Right ventricle myocardium inferior (tissue), 1 donor: ENCODE measurements at regions of chr5 and their contacts with region 1.

Region 1: GRCh38 chr5:169548315-169548714 is 35.3 kb upstream of the SPDL1 start:
- DNase-seq: no peak
- ATAC-seq: peak; percentile 88

Region 2: DNA sequence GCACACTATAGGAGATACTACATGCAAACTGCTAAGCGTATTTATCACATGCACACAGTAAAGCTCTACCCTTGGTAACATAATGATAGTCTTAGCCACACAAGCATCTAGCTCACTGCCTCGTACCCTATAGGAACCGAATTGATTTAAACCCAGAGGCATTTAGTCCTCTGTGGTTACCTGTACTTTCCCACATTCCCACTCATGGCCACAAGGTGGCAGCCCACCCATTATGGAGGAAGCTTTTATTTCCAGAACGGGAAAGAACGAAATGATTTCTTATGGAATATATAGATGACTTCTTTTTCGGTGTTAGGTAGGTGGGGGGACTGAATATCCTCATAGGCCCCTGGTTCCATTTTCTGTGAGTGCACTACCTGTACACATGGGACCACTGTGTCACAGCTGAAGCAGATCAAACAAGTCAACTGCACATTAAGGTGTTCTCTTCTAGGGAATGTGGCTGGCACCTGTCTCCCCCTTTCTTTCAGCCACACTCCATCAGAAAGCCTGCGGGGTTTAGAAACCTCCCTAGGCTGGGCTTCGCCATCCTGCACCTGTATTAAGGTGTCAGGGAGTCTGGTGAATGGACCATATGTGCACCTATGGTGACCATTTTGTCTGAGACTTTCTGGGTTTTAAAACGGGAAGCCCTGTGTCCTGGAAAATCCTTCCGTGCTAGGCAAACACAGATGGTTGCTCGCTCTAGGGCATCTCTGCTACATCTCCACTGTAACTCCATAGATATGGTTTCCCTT is 560.6 kb before region 1 on chr5:
- intact Hi-C with region 1: loop called (anchors 5 kb)
- DNase-seq: peak; percentile 81
- ATAC-seq: peak; percentile 56

Region 3: DNA sequence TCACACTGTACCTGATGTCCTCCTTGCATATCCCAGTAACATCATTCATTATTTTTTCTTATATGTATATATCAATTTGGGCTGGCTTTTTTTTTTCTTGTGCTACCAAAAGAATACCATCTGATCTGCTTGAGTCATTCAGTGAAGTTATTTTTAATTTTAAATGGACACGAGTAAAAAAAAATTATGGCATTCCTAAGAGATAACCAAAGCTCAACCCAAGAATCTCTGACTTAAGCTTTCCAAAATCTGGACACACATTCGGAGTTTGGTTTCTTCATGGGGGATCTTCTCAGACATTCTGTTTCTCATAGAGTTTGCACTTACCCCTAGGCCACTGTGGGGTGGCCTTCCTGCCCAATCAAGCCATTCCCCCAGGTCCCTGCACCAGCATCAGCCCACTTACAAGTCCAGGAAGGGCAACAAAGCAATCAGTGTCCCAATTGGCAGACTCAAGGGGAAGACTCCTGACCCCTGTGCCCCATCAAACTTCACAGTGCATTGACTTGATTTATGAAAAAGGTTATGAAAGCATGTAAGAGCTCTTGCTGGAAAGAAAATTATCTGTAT is 13.9 kb before region 1 on chr5:
- intact Hi-C with region 1: no loop called
- DNase-seq: no peak
- ATAC-seq: no peak

Region 4: GRCh38 chr5:169826618-169827017 is 278.3 kb after region 1 on chr5:
- intact Hi-C with region 1: no loop called
- DNase-seq: no peak
- ATAC-seq: no peak